Transverse colon (tissue), 4 donors: ENCODE measurements at regions of chr7 and their contacts with region 1.

Region 1: DNA sequence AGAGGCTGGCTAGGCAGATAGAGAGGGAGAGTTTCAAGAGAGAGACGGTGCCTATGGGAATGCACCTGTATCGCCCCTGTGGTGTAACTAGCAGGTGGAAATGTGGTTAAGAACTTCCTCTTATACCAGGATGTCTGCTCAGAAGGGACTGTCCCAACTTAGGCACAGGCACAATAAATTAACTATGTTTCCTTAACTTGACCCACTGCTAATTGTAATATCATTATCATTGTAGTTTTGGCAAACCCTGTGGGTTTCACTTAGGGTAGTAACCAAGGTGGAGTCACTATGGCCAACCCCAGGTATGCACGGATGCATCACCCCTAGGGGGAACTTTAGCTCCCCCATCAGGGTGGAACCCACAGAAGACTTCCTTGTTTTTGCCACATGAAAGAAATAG is 455.7 kb downstream of the DGKB start:
- DNase-seq: no peak
- H3K4me3 ChIP-seq: no peak overlapping the region
- H3K27ac ChIP-seq: no peak overlapping the region
- H3K4me1 ChIP-seq: no peaks in the 10 kb centered on the region
- H3K27me3 ChIP-seq: no peaks in the 10 kb centered on the region
- CTCF ChIP-seq: no peak
- EP300 ChIP-seq: no peak
- POLR2A ChIP-seq: no peak

Region 2: GRCh38 chr7:13386741-13387140 is 1060.1 kb before region 1 on chr7:
- in situ Hi-C with region 1: no loop called
- intact Hi-C with region 1: no loop called
- DNase-seq: no peak
- H3K4me3 ChIP-seq: no peak overlapping the region
- H3K27ac ChIP-seq: no peak overlapping the region
- H3K4me1 ChIP-seq: no peaks in the 10 kb centered on the region
- H3K27me3 ChIP-seq: no peaks in the 10 kb centered on the region
- CTCF ChIP-seq: no peak
- EP300 ChIP-seq: no peak
- POLR2A ChIP-seq: no peak

Region 3: GRCh38 chr7:14288701-14289100 is 158.1 kb before region 1 on chr7:
- in situ Hi-C with region 1: no loop called
- intact Hi-C with region 1: no loop called
- DNase-seq: no peak
- H3K4me3 ChIP-seq: no peak overlapping the region
- H3K27ac ChIP-seq: no peak overlapping the region
- H3K4me1 ChIP-seq: peaks cover 0 to 4% (median 2%) of the 10 kb centered on the region in 4 donors
- H3K27me3 ChIP-seq: no peaks in the 10 kb centered on the region
- CTCF ChIP-seq: no peak
- EP300 ChIP-seq: no peak
- POLR2A ChIP-seq: no peak

Region 4: DNA sequence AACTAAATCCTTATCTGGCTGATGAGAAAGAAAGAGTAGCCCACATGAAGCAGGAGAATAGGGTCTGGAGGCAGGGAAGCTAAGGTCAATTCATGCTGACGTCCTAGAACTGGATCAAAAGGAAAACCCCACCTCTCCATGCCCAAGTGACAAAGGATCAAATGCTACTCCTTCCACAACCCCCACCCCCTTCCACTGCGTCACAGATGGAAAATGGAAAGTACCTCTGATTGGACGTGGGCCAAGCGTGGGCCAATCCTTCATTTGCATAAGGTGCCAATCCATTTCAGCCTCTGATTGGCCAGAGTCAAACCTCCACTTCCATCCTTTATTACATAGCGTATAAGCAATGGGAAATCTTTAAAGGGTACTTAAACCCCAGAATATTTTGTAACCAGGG is 26.1 kb before region 1 on chr7:
- in situ Hi-C with region 1: no loop called
- intact Hi-C with region 1: loop called (anchors 1 kb)
- DNase-seq: no peak
- H3K4me3 ChIP-seq: no peak overlapping the region
- H3K27ac ChIP-seq: no peak overlapping the region
- H3K4me1 ChIP-seq: no peaks in the 10 kb centered on the region
- H3K27me3 ChIP-seq: no peaks in the 10 kb centered on the region
- CTCF ChIP-seq: no peak
- EP300 ChIP-seq: no peak
- POLR2A ChIP-seq: no peak

Region 5: GRCh38 chr7:14507617-14508016 is 60.8 kb after region 1 on chr7:
- in situ Hi-C with region 1: no loop called
- intact Hi-C with region 1: no loop called
- DNase-seq: no peak
- H3K4me3 ChIP-seq: no peak overlapping the region
- H3K27ac ChIP-seq: no peak overlapping the region
- H3K4me1 ChIP-seq: no peaks in the 10 kb centered on the region
- H3K27me3 ChIP-seq: no peaks in the 10 kb centered on the region
- CTCF ChIP-seq: no peak
- EP300 ChIP-seq: no peak
- POLR2A ChIP-seq: no peak

Region 6: DNA sequence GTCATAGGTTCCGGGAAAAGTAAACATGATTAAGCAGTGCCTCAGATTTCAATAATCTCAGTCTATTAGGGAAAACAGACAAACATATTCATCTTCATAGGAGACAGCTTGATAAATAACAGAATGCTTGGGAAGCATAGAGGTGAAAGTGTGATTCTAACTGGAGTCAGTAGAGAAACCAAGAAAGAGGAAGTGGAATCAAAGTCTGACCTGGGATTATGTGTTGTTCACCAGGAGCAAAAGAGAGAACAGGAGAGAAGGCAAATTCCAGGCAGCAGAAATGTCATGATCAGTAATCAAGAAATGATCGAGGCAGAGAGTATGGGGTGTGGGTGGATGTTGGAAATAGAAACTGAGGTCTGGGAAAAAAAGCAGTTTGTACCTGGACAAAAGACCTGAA is 412.0 kb after region 1 on chr7:
- in situ Hi-C with region 1: no loop called
- intact Hi-C with region 1: no loop called
- DNase-seq: no peak
- H3K4me3 ChIP-seq: no peak overlapping the region
- H3K27ac ChIP-seq: no peak overlapping the region
- H3K4me1 ChIP-seq: no peaks in the 10 kb centered on the region
- H3K27me3 ChIP-seq: no peaks in the 10 kb centered on the region
- CTCF ChIP-seq: no peak
- EP300 ChIP-seq: no peak
- POLR2A ChIP-seq: no peak